H1 (cell line): ENCODE measurements at regions of chr10 and their contacts with region 1.

Region 1: GRCh38 chr10:49759787-49760551 is 2.2 kb downstream of the OGDHL start:
- DNase-seq: no peak
- H3K4me3 ChIP-seq: no peak overlapping the region
- H3K27ac ChIP-seq: no peak overlapping the region
- H3K4me1 ChIP-seq: peaks cover 0 to 5% (median 0%) of the 10 kb centered on the region in 4 experiments; a peak in 3 of 7 replicates
- H3K27me3 ChIP-seq: peaks cover 0 to 6% (median 3%) of the 10 kb centered on the region in 4 experiments; a peak in 3 of 7 replicates
- CTCF ChIP-seq: peak in 1 of 3 experiments; percentile 7; a peak in 1 of 4 replicates
- EP300 ChIP-seq: no peak
- POLR2A ChIP-seq: no peak
- RAD21 ChIP-seq: no peak; a peak in 1 of 4 replicates

Region 2: DNA sequence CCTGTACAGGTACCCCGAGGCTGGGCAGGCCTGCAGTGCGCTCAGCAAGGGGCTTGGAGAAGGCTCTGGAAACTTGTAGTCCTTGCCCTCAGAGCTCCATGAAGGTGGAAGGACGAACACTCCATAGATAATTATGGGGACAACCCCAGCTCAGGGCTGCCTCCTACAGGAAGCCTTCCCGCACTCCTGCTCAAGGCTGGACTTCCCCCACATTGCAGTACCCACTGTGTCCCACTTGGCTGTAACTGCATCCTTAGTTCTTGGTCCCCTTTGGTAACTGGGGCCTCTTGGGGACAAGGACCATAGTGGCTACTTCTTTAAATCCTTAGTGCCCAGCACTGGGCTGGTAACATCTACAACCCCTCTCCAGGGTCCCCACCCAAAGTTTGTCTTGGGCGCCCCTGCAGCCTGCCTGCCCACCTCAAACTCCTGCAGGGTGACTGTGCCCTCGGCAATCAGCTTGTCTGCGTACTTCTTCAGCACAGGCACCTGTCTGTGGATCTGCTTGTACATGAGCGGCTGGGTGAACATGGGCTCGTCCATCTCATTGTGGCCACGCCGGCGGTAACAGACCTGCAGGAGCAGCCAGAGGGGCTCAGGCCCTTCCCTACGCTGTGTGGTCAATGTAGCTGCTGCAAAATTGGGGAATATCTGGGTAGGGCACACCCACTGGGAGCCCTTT is 14.9 kb before region 1 on chr10:
- CTCF ChIA-PET with region 1: interaction called, 11 read pairs
- POLR2A ChIA-PET with region 1: interaction called, 4 read pairs
- DNase-seq: no peak
- H3K4me3 ChIP-seq: no peak overlapping the region
- H3K27ac ChIP-seq: no peak overlapping the region
- H3K4me1 ChIP-seq: no peaks in the 10 kb centered on the region
- H3K27me3 ChIP-seq: no peaks in the 10 kb centered on the region
- CTCF ChIP-seq: peak; percentile 74 to 88 (median 82)
- EP300 ChIP-seq: no peak
- POLR2A ChIP-seq: no peak
- RAD21 ChIP-seq: peak; percentile 60 to 68

Region 3: DNA sequence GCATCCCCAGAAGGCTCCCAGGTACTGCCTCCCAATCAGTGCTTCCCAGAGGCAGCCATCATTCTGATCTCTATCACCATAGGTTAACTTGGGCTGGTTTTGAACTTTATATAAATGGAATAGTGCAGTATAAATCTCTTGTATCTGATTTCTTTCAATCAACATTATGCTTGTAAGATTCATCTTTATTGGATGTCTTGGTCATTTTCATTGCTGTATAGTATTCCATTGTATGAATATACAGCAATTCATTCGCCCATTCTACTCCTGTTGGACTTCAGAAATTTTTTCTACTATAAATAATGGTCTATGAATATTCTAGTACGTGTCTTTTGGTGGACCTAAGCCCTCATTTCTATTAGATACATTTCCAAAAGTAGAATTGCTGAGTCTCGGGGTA is 18.2 kb after region 1 on chr10:
- CTCF ChIA-PET with region 1: no interaction called
- POLR2A ChIA-PET with region 1: no interaction called
- DNase-seq: no peak
- H3K4me3 ChIP-seq: no peak overlapping the region
- H3K27ac ChIP-seq: no peak overlapping the region
- H3K4me1 ChIP-seq: no peaks in the 10 kb centered on the region
- H3K27me3 ChIP-seq: no peaks in the 10 kb centered on the region
- CTCF ChIP-seq: no peak
- EP300 ChIP-seq: no peak
- POLR2A ChIP-seq: no peak
- RAD21 ChIP-seq: no peak